ENCODE measurements at regions of chr16 and their contacts with region 1.

Region 1: GRCh38 chr16:81185416-81185815 is 53.1 kb upstream of the BCO1 start:
- DNase-seq: no peak
- H3K4me3 Mint-ChIP-seq: no peak overlapping the region
- H3K27ac Mint-ChIP-seq: no peak overlapping the region
- H3K4me1 Mint-ChIP-seq: no peaks in the 10 kb centered on the region
- H3K27me3 Mint-ChIP-seq: peaks cover 1% of the 10 kb centered on the region

Region 2: GRCh38 chr16:81088836-81089235 is 96.6 kb before region 1 on chr16:
- intact Hi-C with region 1: no loop called
- DNase-seq: no peak
- H3K4me3 Mint-ChIP-seq: no peak overlapping the region
- H3K27ac Mint-ChIP-seq: no peak overlapping the region
- H3K4me1 Mint-ChIP-seq: no peaks in the 10 kb centered on the region
- H3K27me3 Mint-ChIP-seq: no peaks in the 10 kb centered on the region

Region 3: DNA sequence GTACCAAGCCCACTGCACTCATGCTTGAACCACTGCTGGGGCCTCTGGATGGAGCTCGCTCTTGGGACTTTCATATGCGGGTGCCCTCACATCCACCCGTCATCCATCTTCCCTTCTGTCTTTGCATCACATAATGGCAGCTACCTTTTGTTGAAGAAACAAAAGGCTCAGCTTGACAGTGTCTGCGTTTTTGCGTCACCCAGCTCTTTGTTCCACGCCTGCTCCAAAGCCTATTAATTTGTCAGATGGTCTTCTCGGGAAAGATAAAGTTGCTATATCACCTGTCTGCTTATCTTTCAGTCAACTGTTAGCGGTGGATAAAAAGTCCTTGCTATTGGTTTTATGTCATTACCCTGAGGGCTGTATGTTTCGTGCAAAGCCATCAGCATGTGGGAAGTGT is 34.9 kb after region 1 on chr16:
- intact Hi-C with region 1: loop called (anchors 2 kb)
- DNase-seq: no peak
- H3K4me3 Mint-ChIP-seq: no peak overlapping the region
- H3K27ac Mint-ChIP-seq: no peak overlapping the region
- H3K4me1 Mint-ChIP-seq: no peaks in the 10 kb centered on the region
- H3K27me3 Mint-ChIP-seq: peaks cover 10% of the 10 kb centered on the region